Common myeloid progenitor, CD34-positive (primary cell): ENCODE measurements at regions of chr16 and their contacts with region 1.

Region 1: DNA sequence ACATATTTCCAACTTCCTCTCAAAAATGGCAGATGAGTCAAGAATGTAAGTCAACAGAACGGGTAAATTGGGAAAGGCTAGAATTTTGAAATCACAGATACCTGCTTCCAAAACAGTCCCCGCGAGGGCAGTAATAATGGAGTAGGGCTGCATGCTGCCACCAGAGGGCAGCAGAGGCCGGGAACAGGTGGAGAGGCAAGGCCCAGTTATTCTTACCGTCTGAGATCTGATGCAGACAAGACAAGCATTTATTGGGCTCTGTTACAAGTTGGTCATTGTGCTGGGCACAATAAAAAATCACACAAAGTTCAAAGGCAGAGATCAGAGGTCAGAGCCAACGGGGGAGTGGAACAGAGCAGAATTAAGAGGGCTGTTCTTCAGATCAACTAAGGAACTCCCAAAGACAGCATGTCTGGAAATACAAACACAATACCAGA is 8.8 kb upstream of the MLKL start:
- DNase-seq: peak; percentile 77 to 85 (median 77)
- H3K4me3 ChIP-seq: no peak overlapping the region
- H3K27ac ChIP-seq: no peak overlapping the region
- H3K4me1 ChIP-seq: peaks cover 0 to 4% (median 0%) of the 10 kb centered on the region in 4 experiments
- H3K27me3 ChIP-seq: no peaks in the 10 kb centered on the region

Region 2: DNA sequence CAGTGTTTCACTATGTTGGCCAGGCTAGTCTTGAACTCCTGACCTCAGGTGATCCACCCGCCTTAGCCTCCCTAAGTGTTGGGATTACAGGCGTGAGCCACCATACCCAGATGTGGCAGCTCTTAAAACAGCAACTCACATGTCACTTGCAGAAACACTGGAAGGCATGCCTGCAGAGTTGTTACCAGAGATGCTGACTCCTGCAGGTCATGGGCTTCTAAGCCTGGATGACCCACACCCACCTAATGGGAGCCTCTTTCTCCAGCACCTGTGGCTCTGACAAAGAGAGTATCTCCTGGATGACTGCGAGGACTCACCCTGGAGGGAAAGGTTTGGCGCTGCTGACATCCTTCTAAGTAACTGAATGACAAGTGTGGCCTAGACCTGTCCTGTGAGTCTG is 31.6 kb before region 1 on chr16:
- CTCF ChIA-PET with region 1: no interaction called
- POLR2A ChIA-PET with region 1: no interaction called
- DNase-seq: no peak
- H3K4me3 ChIP-seq: no peak overlapping the region
- H3K27ac ChIP-seq: no peak overlapping the region
- H3K4me1 ChIP-seq: no peaks in the 10 kb centered on the region
- H3K27me3 ChIP-seq: no peaks in the 10 kb centered on the region

Region 3: GRCh38 chr16:74726716-74727115 is 17.3 kb after region 1 on chr16:
- CTCF ChIA-PET with region 1: interaction called, 16 read pairs
- POLR2A ChIA-PET with region 1: no interaction called
- DNase-seq: peak in 1 of 3 donors; percentile 33
- H3K4me3 ChIP-seq: no peak overlapping the region
- H3K27ac ChIP-seq: no peak overlapping the region
- H3K4me1 ChIP-seq: peaks cover 9 to 32% (median 26%) of the 10 kb centered on the region in 4 experiments
- H3K27me3 ChIP-seq: no peaks in the 10 kb centered on the region